ENCODE measurements at regions of chr14 and their contacts with region 1.

Region 1: DNA sequence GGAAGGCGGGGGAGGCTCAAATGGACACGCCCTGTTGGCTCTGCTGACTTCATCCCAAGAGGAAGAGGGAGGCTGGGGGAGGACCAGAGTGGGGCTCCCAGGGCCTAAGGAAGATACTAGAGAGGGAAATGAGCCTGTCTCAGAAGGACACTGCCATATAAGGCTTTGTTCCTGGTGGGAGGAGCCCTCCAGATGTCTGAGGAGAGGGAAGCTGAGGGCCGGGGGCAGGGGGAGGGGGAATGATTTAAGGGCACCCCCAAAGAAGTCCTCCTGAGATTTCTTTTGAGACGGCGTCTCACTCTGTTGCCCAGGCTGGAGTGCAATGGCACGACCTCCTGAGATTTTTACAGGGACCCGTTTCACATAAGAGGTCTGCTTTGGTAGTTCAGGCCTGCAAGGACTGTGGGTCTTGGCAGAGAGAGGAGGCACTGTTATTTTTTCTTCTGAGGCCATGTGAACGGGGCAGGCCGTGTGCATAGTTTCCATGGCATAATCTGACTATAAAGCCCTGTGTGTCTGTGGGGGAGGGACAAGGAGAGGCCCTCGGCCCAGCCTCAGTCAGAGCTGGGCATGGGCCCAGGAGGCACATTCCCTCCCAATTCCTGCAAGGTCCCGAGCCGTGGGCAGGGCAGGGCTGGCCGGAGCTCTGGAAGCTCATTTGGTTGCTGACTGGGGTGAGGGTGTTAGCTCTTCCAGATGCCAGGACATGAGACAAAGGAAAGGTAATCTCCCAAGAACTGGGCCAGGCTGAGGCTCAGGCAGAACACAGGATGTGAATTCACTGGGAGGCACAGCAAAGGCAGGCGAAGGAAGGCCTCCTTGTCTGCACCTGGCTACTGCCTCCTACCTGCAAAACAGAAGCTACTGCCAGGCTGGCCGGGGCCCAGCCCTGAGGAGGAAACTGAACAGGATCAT is 22.2 kb upstream of the PLEKHG3 start:
- DNase-seq: no peak
- ATAC-seq: peak; percentile 32; the same call in 1 of the 2 replicates
- H3K4me3 ChIP-seq: no peak overlapping the region
- H3K27ac ChIP-seq: no peak overlapping the region
- H3K4me1 ChIP-seq: no peaks in the 10 kb centered on the region
- H3K27me3 ChIP-seq: no peaks in the 10 kb centered on the region
- CTCF ChIP-seq: no peak

Region 2: GRCh38 chr14:64137657-64138290 is 544.3 kb before region 1 on chr14:
- CTCF ChIA-PET with region 1: no interaction called
- POLR2A ChIA-PET with region 1: no interaction called
- in situ Hi-C with region 1: no loop called
- intact Hi-C with region 1: no loop called
- DNase-seq: no peak
- ATAC-seq: no peak
- H3K4me3 ChIP-seq: no peak overlapping the region
- H3K27ac ChIP-seq: no peak overlapping the region
- H3K4me1 ChIP-seq: no peaks in the 10 kb centered on the region
- H3K27me3 ChIP-seq: no peaks in the 10 kb centered on the region
- CTCF ChIP-seq: peak; percentile 44

Region 3: GRCh38 chr14:64549781-64550620 is 132.1 kb before region 1 on chr14 and contains the start of gene PPP1R36:
- CTCF ChIA-PET with region 1: no interaction called
- POLR2A ChIA-PET with region 1: interaction called, 14 read pairs
- in situ Hi-C with region 1: no loop called
- intact Hi-C with region 1: no loop called
- DNase-seq: no peak
- ATAC-seq: peak; percentile 93
- H3K4me3 ChIP-seq: peak within 1 kb of the TSS; percentile 28 to 44
- H3K27ac ChIP-seq: no peak within 1 kb of the TSS
- H3K4me1 ChIP-seq: no peaks in the 10 kb centered on the region
- H3K27me3 ChIP-seq: 0 out of 2 replicates have a peak, but pooled peaks cover 4% of the 10 kb centered on the region
- CTCF ChIP-seq: no peak
- total RNA-seq, gene PPP1R36: 0.69 TPM

Region 4: GRCh38 chr14:64726585-64726890 is 44.5 kb after region 1 on chr14:
- CTCF ChIA-PET with region 1: no interaction called
- POLR2A ChIA-PET with region 1: no interaction called
- in situ Hi-C with region 1: no loop called
- intact Hi-C with region 1: no loop called
- DNase-seq: no peak
- ATAC-seq: peak; percentile 83
- H3K4me3 ChIP-seq: no peak overlapping the region
- H3K27ac ChIP-seq: no peak overlapping the region
- H3K4me1 ChIP-seq: peaks cover 12% of the 10 kb centered on the region; the same call in 1 of the 2 replicates
- H3K27me3 ChIP-seq: no peaks in the 10 kb centered on the region
- CTCF ChIP-seq: no peak